Caco-2 (cell line): ENCODE measurements at regions of chr16 and their contacts with region 1.

Region 1: GRCh38 chr16:27367461-27368357 is 34.3 kb upstream of the IL21R start:
- DNase-seq: peak; percentile 75 to 78
- H3K4me3 ChIP-seq: no peak overlapping the region
- H3K4me3 Mint-ChIP-seq: peak overlapping the region; percentile 7
- H3K27ac Mint-ChIP-seq: no peak overlapping the region
- H3K4me1 ChIP-seq: peaks cover 30% of the 10 kb centered on the region
- H3K4me1 Mint-ChIP-seq: peaks cover 20% of the 10 kb centered on the region
- H3K27me3 ChIP-seq: no peaks in the 10 kb centered on the region
- H3K27me3 Mint-ChIP-seq: no peaks in the 10 kb centered on the region
- CTCF ChIP-seq: peak; percentile 72 to 81

Region 2: GRCh38 chr16:27154705-27155521 is 212.8 kb before region 1 on chr16:
- CTCF ChIA-PET with region 1: interaction called, 3 read pairs
- POLR2A ChIA-PET with region 1: no interaction called
- intact Hi-C with region 1: loop called (anchors 1 kb)
- DNase-seq: peak; percentile 38 to 61
- H3K4me3 ChIP-seq: no peak overlapping the region
- H3K4me3 Mint-ChIP-seq: no peak overlapping the region
- H3K27ac Mint-ChIP-seq: no peak overlapping the region
- H3K4me1 ChIP-seq: no peaks in the 10 kb centered on the region
- H3K4me1 Mint-ChIP-seq: peaks cover 5% of the 10 kb centered on the region
- H3K27me3 ChIP-seq: no peaks in the 10 kb centered on the region
- H3K27me3 Mint-ChIP-seq: no peaks in the 10 kb centered on the region
- CTCF ChIP-seq: peak; percentile 89 to 95

Region 3: GRCh38 chr16:27222249-27223225 is 145.2 kb before region 1 on chr16:
- CTCF ChIA-PET with region 1: interaction called, 11 read pairs
- POLR2A ChIA-PET with region 1: no interaction called
- intact Hi-C with region 1: no loop called
- DNase-seq: no peak
- H3K4me3 ChIP-seq: no peak overlapping the region
- H3K4me3 Mint-ChIP-seq: no peak overlapping the region
- H3K27ac Mint-ChIP-seq: no peak overlapping the region
- H3K4me1 ChIP-seq: peaks cover 6% of the 10 kb centered on the region; the same call in 1 of the 2 replicates
- H3K4me1 Mint-ChIP-seq: peaks cover 6% of the 10 kb centered on the region
- H3K27me3 ChIP-seq: no peaks in the 10 kb centered on the region
- H3K27me3 Mint-ChIP-seq: no peaks in the 10 kb centered on the region
- CTCF ChIP-seq: no peak

Region 4: GRCh38 chr16:27268376-27269299 is 99.1 kb before region 1 on chr16 and contains the start of gene NSMCE1:
- CTCF ChIA-PET with region 1: interaction called, 3 read pairs
- POLR2A ChIA-PET with region 1: no interaction called
- intact Hi-C with region 1: loop called (anchors 2 kb)
- DNase-seq: peak; percentile 96
- H3K4me3 ChIP-seq: peak within 1 kb of the TSS; percentile 91
- H3K4me3 Mint-ChIP-seq: peak within 1 kb of the TSS; percentile 99
- H3K27ac Mint-ChIP-seq: peak within 1 kb of the TSS; percentile 97
- H3K4me1 ChIP-seq: peaks cover 25% of the 10 kb centered on the region
- H3K4me1 Mint-ChIP-seq: peaks cover 29% of the 10 kb centered on the region
- H3K27me3 ChIP-seq: no peaks in the 10 kb centered on the region
- H3K27me3 Mint-ChIP-seq: no peaks in the 10 kb centered on the region
- CTCF ChIP-seq: peak; percentile 16 to 31
- total RNA-seq, gene NSMCE1: 33.4 and 37.0 TPM in 2 replicates

Region 5: GRCh38 chr16:27326738-27327585 is 40.7 kb before region 1 on chr16:
- CTCF ChIA-PET with region 1: no interaction called
- POLR2A ChIA-PET with region 1: no interaction called
- intact Hi-C with region 1: loop called (anchors 5 kb)
- DNase-seq: peak; percentile 77 to 82
- H3K4me3 ChIP-seq: no peak overlapping the region
- H3K4me3 Mint-ChIP-seq: no peak overlapping the region
- H3K27ac Mint-ChIP-seq: peak overlapping the region; percentile 66
- H3K4me1 ChIP-seq: peaks cover 24% of the 10 kb centered on the region
- H3K4me1 Mint-ChIP-seq: peaks cover 24% of the 10 kb centered on the region
- H3K27me3 ChIP-seq: no peaks in the 10 kb centered on the region
- H3K27me3 Mint-ChIP-seq: no peaks in the 10 kb centered on the region
- CTCF ChIP-seq: no peak